Activated CD4-positive, alpha-beta T cell treated with anti-CD3 and anti-CD28 coated beads, Interleukin-2, amount 10 ng/mL, durations not matched to agents 24 days and 14 days (primary cell): ENCODE measurements at regions of chrX and their contacts with region 1.

Region 1: GRCh38 chrX:124239911-124240310 is 92.5 kb upstream of the TEX13D start:
- DNase-seq: peak; percentile 84
- H3K4me3 Mint-ChIP-seq: peak overlapping the region; percentile 71
- H3K27ac Mint-ChIP-seq: peak overlapping the region; percentile 84
- H3K4me1 Mint-ChIP-seq: peaks cover 31% of the 10 kb centered on the region
- H3K27me3 Mint-ChIP-seq: no peaks in the 10 kb centered on the region

Region 2: DNA sequence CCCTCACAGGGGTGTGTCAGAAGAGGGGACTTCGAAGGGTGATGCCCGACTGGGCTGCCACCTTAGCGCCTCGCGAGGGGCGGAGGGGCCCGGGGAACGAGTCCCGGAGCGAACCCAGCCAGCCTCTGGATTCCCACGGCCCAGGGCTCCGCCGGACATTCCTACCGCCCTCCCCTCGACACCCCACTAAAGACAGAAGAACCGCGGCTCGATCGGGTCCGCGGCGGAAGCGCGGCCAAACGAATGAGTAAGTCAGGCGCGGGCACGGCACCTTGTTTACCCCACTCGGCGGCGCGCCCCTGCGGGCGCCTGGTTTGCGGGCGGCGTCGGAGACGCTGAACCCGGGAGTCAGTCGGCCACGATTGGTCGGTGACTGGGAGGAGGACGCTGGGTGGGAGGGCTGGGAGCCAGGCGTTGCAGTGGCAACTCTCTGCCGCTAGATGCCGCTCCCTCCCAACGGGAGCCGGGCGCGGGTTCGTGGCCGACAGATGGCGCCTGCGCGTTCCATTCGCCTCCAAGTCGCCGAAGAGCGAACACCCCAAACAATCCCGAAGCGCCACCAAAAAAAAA is 279.8 kb before region 1 on chrX:
- intact Hi-C with region 1: loop called (anchors 5 kb)
- DNase-seq: peak; percentile 95
- H3K4me3 Mint-ChIP-seq: peak overlapping the region; percentile 84
- H3K27ac Mint-ChIP-seq: peak overlapping the region; percentile 98
- H3K4me1 Mint-ChIP-seq: peaks cover 14% of the 10 kb centered on the region
- H3K27me3 Mint-ChIP-seq: no peaks in the 10 kb centered on the region

Region 3: GRCh38 chrX:124217304-124218251 is 22.3 kb before region 1 on chrX:
- intact Hi-C with region 1: loop called (anchors 1 kb)
- DNase-seq: peak; percentile 89
- H3K4me3 Mint-ChIP-seq: peak overlapping the region; percentile 73
- H3K27ac Mint-ChIP-seq: peak overlapping the region; percentile 97
- H3K4me1 Mint-ChIP-seq: peaks cover 70% of the 10 kb centered on the region
- H3K27me3 Mint-ChIP-seq: no peaks in the 10 kb centered on the region

Region 4: GRCh38 chrX:124280294-124280902 is 40.5 kb after region 1 on chrX:
- intact Hi-C with region 1: loop called (anchors 5 kb)
- DNase-seq: no peak
- H3K4me3 Mint-ChIP-seq: peak overlapping the region; percentile 49
- H3K27ac Mint-ChIP-seq: peak overlapping the region; percentile 83
- H3K4me1 Mint-ChIP-seq: peaks cover 17% of the 10 kb centered on the region
- H3K27me3 Mint-ChIP-seq: no peaks in the 10 kb centered on the region

Region 5: DNA sequence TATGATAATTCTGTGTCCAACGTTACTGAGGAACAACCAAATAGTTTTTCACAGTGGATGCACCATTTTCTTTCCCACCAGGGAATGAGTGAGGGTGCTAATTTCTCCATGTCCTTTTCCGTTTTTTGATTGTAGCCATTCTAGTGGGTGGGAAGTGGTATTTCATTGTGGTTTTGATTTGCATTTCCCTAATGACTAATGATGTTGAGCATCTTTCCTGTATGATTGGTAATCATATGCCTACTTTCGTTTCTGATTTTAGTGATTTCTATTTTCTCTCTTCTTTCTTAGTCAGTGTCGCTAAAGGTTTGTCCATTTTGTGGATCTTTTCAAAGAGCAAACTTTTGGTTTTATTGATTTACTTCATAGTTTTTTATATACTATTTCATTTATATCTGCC is 60.5 kb after region 1 on chrX:
- intact Hi-C with region 1: loop called (anchors 1 kb)
- DNase-seq: peak; percentile 50
- H3K4me3 Mint-ChIP-seq: no peak overlapping the region
- H3K27ac Mint-ChIP-seq: peak overlapping the region; percentile 65
- H3K4me1 Mint-ChIP-seq: peaks cover 14% of the 10 kb centered on the region
- H3K27me3 Mint-ChIP-seq: no peaks in the 10 kb centered on the region

Region 6: DNA sequence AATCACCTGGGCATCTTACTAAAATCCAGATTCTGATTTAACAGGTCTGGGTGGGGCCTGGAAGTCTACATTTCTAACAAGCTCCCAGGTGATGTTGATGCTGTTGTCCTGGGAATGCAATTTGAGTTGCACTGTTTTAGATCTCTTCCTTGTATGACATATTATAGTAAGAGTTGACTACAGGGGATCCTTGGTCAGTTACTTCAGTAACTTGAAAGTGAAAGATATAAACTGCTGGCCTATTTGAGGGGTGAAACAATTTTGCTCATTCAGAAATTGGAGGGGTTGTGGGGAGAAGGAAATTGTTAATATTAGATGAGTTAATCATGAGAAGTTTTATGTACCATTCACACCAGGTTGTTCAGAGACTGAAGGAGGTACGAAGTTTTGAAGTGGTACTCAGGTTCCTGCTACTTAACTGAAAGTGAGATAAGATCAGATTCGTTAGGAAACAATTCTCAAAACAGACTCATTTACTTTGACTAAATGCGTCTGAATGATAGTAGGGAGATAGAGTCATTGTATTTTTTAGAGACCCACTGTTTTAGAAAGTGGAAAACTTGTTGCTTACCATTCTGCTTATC is 119.0 kb after region 1 on chrX:
- intact Hi-C with region 1: loop called (anchors 1 kb)
- DNase-seq: peak; percentile 60
- H3K4me3 Mint-ChIP-seq: peak overlapping the region; percentile 73
- H3K27ac Mint-ChIP-seq: peak overlapping the region; percentile 82
- H3K4me1 Mint-ChIP-seq: peaks cover 48% of the 10 kb centered on the region
- H3K27me3 Mint-ChIP-seq: no peaks in the 10 kb centered on the region